CD4-positive, alpha-beta memory T cell (primary cell): ENCODE measurements at regions of chr16 and their contacts with region 1.

Region 1: GRCh38 chr16:85610508-85611332 is 2.4 kb upstream of the GSE1 start:
- DNase-seq: peak; percentile 81 to 85 (median 84)
- H3K4me3 ChIP-seq: peak overlapping the region; percentile 37 to 47
- H3K4me3 Mint-ChIP-seq: peak overlapping the region; percentile 84 to 96 (median 86)
- H3K27ac ChIP-seq: no peak overlapping the region
- H3K27ac Mint-ChIP-seq: peak overlapping the region; percentile 78 to 92 (median 89)
- H3K4me1 ChIP-seq: peaks cover 32% of the 10 kb centered on the region
- H3K4me1 Mint-ChIP-seq: peaks cover 3 to 45% (median 16%) of the 10 kb centered on the region in 4 donors
- H3K27me3 ChIP-seq: no peaks in the 10 kb centered on the region
- H3K27me3 Mint-ChIP-seq: no peaks in the 10 kb centered on the region

Region 2: DNA sequence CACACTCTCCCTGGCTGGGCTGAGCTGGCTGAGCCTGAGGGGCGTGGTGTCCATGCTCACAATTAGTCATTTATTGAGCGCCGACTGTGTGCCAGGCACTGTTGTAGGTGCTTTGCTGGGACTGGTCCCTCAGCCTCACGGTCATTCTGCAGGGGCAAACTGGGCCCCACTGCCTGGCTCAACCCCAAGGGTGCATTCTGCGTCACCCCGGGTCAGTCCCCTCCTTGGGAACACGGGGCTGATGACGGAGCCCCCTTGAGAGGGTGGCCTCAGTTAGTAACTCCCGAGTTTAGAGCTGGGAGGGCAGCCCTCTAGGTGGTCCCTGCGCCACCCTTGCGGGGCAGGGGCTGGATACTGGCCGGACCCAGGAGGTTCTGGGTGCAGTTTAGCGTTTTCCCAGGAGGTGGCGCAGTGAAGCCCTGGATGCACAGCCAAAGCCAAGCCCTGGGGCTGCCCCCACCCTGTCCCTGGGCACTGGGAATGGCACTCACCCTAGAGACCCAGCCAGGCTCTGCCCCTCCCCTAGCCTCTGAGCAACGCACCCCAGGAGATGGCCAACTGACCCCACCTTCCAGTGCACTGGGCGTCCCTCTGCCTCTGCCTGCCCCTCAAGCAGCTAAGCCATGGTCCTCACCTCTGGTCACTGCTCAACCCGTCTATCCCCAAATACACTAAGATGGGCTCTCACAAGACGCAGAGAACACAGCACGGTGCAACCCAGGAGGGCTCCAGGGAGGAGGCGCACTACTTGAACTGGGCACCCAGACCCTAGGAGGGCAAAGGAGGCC is 240.8 kb before region 1 on chr16:
- CTCF ChIA-PET with region 1: interaction called, 3 read pairs
- POLR2A ChIA-PET with region 1: interaction called, 3 read pairs
- intact Hi-C with region 1: loop called (anchors 1 kb)
- DNase-seq: peak in 4 of 5 donors; percentile 12 to 19 (median 14)
- H3K4me3 ChIP-seq: no peak overlapping the region
- H3K4me3 Mint-ChIP-seq: no peak overlapping the region
- H3K27ac ChIP-seq: no peak overlapping the region
- H3K27ac Mint-ChIP-seq: no peak overlapping the region
- H3K4me1 ChIP-seq: no peaks in the 10 kb centered on the region
- H3K4me1 Mint-ChIP-seq: peaks cover 0 to 5% (median 1%) of the 10 kb centered on the region in 4 donors
- H3K27me3 ChIP-seq: no peaks in the 10 kb centered on the region
- H3K27me3 Mint-ChIP-seq: peaks cover 1% of the 10 kb centered on the region in 2 donors

Region 3: GRCh38 chr16:85420501-85421337 is 190.0 kb before region 1 on chr16:
- CTCF ChIA-PET with region 1: interaction called, 77 read pairs
- POLR2A ChIA-PET with region 1: interaction called, 7 read pairs
- intact Hi-C with region 1: loop called (anchors 1 kb)
- DNase-seq: peak in 4 of 5 donors; percentile 72 to 80 (median 72)
- H3K4me3 ChIP-seq: no peak overlapping the region
- H3K4me3 Mint-ChIP-seq: no peak overlapping the region
- H3K27ac ChIP-seq: no peak overlapping the region
- H3K27ac Mint-ChIP-seq: peak overlapping the region in 2 of 7 donors; percentile 21 to 89
- H3K4me1 ChIP-seq: peaks cover 4% of the 10 kb centered on the region
- H3K4me1 Mint-ChIP-seq: peaks cover 0 to 2% (median under 1%) of the 10 kb centered on the region in 4 donors
- H3K27me3 ChIP-seq: no peaks in the 10 kb centered on the region
- H3K27me3 Mint-ChIP-seq: peaks cover 3 to 7% of the 10 kb centered on the region in 2 donors

Region 4: DNA sequence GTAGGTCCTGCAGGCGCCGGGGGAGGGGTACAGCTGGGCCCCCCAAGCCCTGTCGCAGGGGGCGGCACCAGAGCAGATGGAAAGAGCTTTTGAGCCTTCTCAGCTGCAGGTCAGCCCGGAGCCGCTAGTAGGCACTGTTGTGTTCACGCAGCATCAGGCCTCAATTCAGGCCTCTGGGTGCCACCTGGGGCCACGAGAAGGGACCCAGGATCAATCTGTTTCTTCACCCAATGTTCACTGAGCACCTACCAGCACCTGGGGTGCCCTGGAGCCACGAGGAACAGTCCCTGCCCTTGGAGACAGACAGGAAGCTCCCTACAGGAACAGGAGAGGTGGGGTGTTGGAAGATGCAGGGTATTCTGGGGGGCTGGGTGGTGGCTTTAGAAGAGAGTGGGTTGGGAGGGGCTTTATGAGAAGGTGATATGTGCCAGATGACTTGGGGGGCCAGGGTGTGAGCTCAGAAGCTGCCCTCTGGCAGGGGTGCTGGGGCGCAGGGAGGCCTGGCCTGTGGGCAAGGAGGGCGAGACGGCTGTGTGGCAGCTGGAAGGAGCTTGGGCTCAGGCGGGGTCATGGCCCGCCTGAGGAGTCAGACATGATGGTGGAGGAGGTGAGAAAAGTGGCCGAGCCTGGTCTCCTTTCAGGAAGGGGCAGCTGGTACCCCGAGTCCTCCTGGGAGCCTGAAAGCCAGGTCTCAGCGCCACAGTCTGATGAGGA is 119.5 kb before region 1 on chr16:
- CTCF ChIA-PET with region 1: interaction called, 17 read pairs
- POLR2A ChIA-PET with region 1: no interaction called
- intact Hi-C with region 1: loop called (anchors 1 kb)
- DNase-seq: peak in 4 of 5 donors; percentile 11 to 33 (median 24)
- H3K4me3 ChIP-seq: no peak overlapping the region
- H3K4me3 Mint-ChIP-seq: no peak overlapping the region
- H3K27ac ChIP-seq: no peak overlapping the region
- H3K27ac Mint-ChIP-seq: no peak overlapping the region
- H3K4me1 ChIP-seq: no peaks in the 10 kb centered on the region
- H3K4me1 Mint-ChIP-seq: no peaks in the 10 kb centered on the region
- H3K27me3 ChIP-seq: no peaks in the 10 kb centered on the region
- H3K27me3 Mint-ChIP-seq: no peaks in the 10 kb centered on the region

Region 5: GRCh38 chr16:85554112-85554813 is 56.5 kb before region 1 on chr16:
- CTCF ChIA-PET with region 1: interaction called, 29 read pairs
- POLR2A ChIA-PET with region 1: interaction called, 45 read pairs
- intact Hi-C with region 1: loop called (anchors 1 kb)
- DNase-seq: peak; percentile 74 to 89 (median 75)
- H3K4me3 ChIP-seq: peak overlapping the region; percentile 65 to 76
- H3K4me3 Mint-ChIP-seq: peak overlapping the region; percentile 88 to 99 (median 94)
- H3K27ac ChIP-seq: peak overlapping the region; percentile 61
- H3K27ac Mint-ChIP-seq: peak overlapping the region; percentile 90 to 98 (median 96)
- H3K4me1 ChIP-seq: peaks cover 21% of the 10 kb centered on the region
- H3K4me1 Mint-ChIP-seq: peaks cover 17 to 43% (median 31%) of the 10 kb centered on the region in 4 donors
- H3K27me3 ChIP-seq: no peaks in the 10 kb centered on the region
- H3K27me3 Mint-ChIP-seq: peaks cover 0 to 1% of the 10 kb centered on the region in 2 donors

Region 6: DNA sequence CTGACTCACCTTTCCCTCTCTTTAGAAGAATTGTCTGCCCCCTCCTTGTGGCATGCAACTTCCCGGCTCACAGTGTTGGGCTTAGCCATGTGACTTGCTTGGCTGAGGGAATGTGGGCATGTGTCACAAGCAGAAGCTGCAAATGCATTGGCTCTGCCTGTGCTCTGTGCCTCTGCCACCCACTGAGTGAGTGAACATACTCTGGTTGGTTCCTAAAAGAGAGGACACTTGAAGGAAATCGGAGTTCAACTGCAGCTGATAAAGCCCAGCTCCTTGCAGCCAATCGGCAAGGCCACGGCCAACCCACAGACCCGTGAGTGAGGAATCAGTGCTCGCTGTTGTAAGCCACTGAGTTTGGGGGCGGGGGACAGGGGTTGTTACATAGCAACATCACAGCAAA is 88.9 kb after region 1 on chr16:
- CTCF ChIA-PET with region 1: no interaction called
- POLR2A ChIA-PET with region 1: no interaction called
- intact Hi-C with region 1: no loop called
- DNase-seq: no peak
- H3K4me3 ChIP-seq: no peak overlapping the region
- H3K4me3 Mint-ChIP-seq: no peak overlapping the region
- H3K27ac ChIP-seq: no peak overlapping the region
- H3K27ac Mint-ChIP-seq: no peak overlapping the region
- H3K4me1 ChIP-seq: no peaks in the 10 kb centered on the region
- H3K4me1 Mint-ChIP-seq: no peaks in the 10 kb centered on the region
- H3K27me3 ChIP-seq: no peaks in the 10 kb centered on the region
- H3K27me3 Mint-ChIP-seq: peaks cover 9 to 14% of the 10 kb centered on the region in 2 donors